Motor neuron (in vitro differentiated cells): ENCODE measurements at regions of chr6 and their contacts with region 1.

Region 1: GRCh38 chr6:140441256-140441655 is 1066.8 kb upstream of the CITED2 start:
- ATAC-seq: peak; percentile 34 to 86 (median 81)
- H3K4me3 ChIP-seq: no peak overlapping the region
- H3K27ac ChIP-seq: no peak overlapping the region
- H3K4me1 ChIP-seq: peaks cover 3 to 16% of the 10 kb centered on the region in 2 donors

Region 2: DNA sequence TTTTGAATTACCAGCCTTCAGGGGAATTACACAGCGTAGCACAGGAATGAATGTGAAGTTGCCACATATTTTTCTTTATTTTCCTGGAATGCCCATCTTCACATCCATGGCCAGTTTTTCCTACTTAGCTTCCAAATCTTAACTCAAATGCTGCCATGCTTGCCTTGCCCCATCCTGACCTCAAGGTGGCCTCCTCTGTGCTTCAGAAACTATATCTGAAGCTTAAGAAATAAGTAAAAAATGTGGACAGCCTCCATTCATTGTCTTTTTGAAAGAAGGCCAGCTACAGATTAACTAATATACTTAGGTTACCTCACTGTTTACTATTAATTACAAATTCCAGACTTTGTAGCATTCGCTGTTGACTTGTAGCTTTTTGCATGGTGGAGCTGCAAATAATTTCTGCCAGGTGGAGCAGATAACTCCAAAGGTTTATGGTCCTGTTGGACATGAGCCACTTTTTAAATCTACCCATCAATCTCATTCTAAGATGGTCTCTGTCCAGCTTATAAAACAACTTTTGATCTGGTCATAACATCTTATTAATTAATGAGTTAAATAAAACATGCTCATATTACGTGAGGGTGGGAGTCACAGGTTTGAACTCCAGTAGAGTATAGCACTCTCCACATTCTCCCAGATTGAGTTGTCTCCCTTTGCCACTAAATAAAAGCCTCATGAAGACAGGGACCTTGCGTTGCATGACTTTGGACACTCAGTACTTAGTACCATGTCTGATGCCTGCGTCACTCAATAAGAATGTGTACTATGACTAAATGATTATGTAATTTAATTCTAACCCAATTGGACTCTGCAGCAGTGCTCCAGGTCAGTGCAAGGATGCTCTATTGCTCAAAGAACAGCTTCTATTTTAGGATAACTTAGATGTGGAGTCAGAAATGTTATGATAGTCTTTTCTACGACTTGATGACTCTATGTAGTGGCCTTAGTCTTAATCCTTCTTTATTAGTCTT is 388.2 kb before region 1 on chr6:
- in situ Hi-C with region 1: loop called in 1 of 9 experiments (anchors 25 kb)
- ATAC-seq: peak in 1 of 8 experiments; percentile 25
- H3K4me3 ChIP-seq: no peak overlapping the region
- H3K27ac ChIP-seq: no peak overlapping the region
- H3K4me1 ChIP-seq: peaks cover 25 to 38% of the 10 kb centered on the region in 2 donors

Region 3: DNA sequence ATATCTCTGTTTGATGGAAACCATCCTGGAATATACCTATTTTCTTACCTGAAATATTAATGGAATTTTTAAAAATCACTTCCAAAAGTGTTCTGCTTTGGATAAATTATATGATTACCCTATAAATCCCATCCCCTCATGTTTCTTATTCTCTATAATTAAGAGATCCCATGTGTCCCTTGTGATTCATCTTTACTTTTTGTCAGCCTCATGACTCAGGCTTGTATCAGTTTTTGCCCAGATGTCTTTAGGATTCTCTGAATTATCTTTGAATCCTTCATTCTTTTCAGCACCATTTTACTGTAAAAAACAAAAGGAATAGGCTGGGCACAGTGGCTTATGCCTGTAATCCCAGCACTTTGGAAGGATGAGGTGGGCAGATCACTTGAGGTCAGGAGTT is 262.3 kb before region 1 on chr6:
- in situ Hi-C with region 1: no loop called
- ATAC-seq: no peak
- H3K4me3 ChIP-seq: no peak overlapping the region
- H3K27ac ChIP-seq: no peak overlapping the region
- H3K4me1 ChIP-seq: peaks cover 0 to 10% of the 10 kb centered on the region in 2 donors

Region 4: GRCh38 chr6:141117874-141118273 is 676.6 kb after region 1 on chr6:
- in situ Hi-C with region 1: no loop called
- ATAC-seq: no peak
- H3K4me3 ChIP-seq: no peak overlapping the region
- H3K27ac ChIP-seq: no peak overlapping the region
- H3K4me1 ChIP-seq: no peaks in the 10 kb centered on the region